Activated naive CD4-positive, alpha-beta T cell treated with anti-CD3 and anti-CD28 coated beads, Interleukin-2, amount 10 ng/mL, durations not matched to agents 7 days and 5 days (primary cell): ENCODE measurements at regions of chr6 and their contacts with region 1.

Region 1: GRCh38 chr6:30238174-30238795 is 25.1 kb upstream of the TRIM26 start:
- DNase-seq: peak; percentile 40
- H3K4me3 Mint-ChIP-seq: no peak overlapping the region
- H3K27ac Mint-ChIP-seq: no peak overlapping the region
- H3K4me1 Mint-ChIP-seq: no peaks in the 10 kb centered on the region
- H3K27me3 Mint-ChIP-seq: peaks cover 19% of the 10 kb centered on the region

Region 2: GRCh38 chr6:30219244-30219643 is 19.0 kb before region 1 on chr6:
- CTCF ChIA-PET with region 1: interaction called, 13 read pairs
- DNase-seq: peak; percentile 64
- H3K4me3 Mint-ChIP-seq: no peak overlapping the region
- H3K27ac Mint-ChIP-seq: no peak overlapping the region
- H3K4me1 Mint-ChIP-seq: peaks cover 19% of the 10 kb centered on the region
- H3K27me3 Mint-ChIP-seq: peaks cover 19% of the 10 kb centered on the region

Region 3: GRCh38 chr6:30227763-30228487 is 10.4 kb before region 1 on chr6:
- CTCF ChIA-PET with region 1: interaction called, 16 read pairs
- DNase-seq: no peak
- H3K4me3 Mint-ChIP-seq: no peak overlapping the region
- H3K27ac Mint-ChIP-seq: no peak overlapping the region
- H3K4me1 Mint-ChIP-seq: peaks cover 4% of the 10 kb centered on the region
- H3K27me3 Mint-ChIP-seq: peaks cover 12% of the 10 kb centered on the region

Region 4: GRCh38 chr6:30396833-30397479 is 158.7 kb after region 1 on chr6:
- CTCF ChIA-PET with region 1: interaction called, 10 read pairs
- DNase-seq: peak; percentile 90
- H3K4me3 Mint-ChIP-seq: no peak overlapping the region
- H3K27ac Mint-ChIP-seq: no peak overlapping the region
- H3K4me1 Mint-ChIP-seq: no peaks in the 10 kb centered on the region
- H3K27me3 Mint-ChIP-seq: peaks cover 50% of the 10 kb centered on the region